Activated B cell treated with CpG ODN at 0.5 μM for 24 hours (primary cell): ENCODE measurements at regions of chr5 and their contacts with region 1.

Region 1: DNA sequence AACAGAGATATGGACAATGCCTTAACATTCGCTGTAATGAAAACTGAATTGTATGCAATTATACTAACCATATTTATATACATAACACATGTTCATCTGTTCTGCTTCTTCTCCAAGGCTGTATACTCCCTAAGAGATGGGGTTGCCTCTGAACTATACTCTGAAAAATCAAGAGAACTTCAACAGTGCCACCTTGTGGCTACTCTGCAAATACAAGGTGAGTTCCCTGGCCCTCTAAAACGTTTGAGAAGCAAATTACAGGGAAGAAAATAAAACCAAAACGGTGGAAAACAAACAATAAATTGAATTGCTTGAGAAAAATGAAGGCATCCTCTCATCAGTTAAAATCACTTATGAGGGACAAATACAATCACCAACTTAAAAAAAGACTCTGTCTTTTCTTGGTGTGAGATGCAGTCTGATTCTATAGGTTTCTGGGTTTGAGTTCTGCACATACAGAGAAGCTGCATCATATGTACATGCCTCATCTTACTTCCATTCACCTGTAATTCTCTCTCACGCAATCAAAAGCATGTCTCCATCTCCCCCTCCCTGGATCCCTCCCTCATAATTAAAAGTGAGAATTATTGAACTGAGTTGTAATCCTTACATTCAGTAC is 98.6 kb downstream of the FBXW11 start:
- DNase-seq: no peak
- ATAC-seq: peak; percentile 73
- H3K4me3 Mint-ChIP-seq: no peak overlapping the region
- H3K27ac Mint-ChIP-seq: peak overlapping the region; percentile 15
- H3K4me1 Mint-ChIP-seq: peaks cover 49% of the 10 kb centered on the region
- H3K27me3 Mint-ChIP-seq: no peaks in the 10 kb centered on the region
- CTCF ChIP-seq: no peak

Region 2: GRCh38 chr5:171207256-171207847 is 700.5 kb before region 1 on chr5:
- CTCF ChIA-PET with region 1: no interaction called
- POLR2A ChIA-PET with region 1: no interaction called
- intact Hi-C with region 1: loop called (anchors 5 kb)
- DNase-seq: no peak
- ATAC-seq: no peak
- H3K4me3 Mint-ChIP-seq: no peak overlapping the region
- H3K27ac Mint-ChIP-seq: no peak overlapping the region
- H3K4me1 Mint-ChIP-seq: no peaks in the 10 kb centered on the region
- H3K27me3 Mint-ChIP-seq: peaks cover 9% of the 10 kb centered on the region
- CTCF ChIP-seq: no peak

Region 3: DNA sequence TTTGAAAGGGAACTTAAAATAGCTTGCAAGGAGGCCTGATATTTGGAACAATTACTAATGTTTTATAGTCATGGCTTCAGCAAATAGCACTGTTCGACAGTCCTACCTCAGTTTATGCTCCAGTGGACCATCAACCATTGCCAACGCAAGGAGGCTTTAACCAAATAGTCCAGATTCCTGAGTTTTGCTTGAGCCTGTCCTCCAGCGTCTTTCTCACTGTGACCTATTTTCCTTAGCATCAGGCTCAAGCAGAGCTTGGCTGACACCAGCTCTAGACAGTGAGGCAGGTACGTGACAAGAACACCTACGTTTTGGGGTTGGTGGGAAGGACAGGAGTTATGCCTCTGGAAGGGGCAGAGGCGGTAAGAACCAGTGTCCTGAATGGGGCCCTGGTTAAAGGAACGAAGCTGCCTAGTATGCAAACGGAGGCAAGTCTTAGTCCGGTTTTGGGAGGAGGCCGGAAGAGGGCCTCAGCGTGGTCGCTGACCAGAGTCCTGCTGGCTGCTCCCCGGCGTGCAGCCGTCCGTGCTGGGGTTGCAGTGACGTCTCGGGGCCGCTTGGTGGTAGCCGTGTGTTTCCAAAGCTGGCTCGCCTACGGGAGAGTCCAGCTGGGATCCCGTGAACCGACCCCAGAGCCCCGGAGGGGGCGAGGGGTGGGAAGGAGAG is 489.4 kb before region 1 on chr5:
- CTCF ChIA-PET with region 1: interaction called, 9 read pairs
- POLR2A ChIA-PET with region 1: no interaction called
- intact Hi-C with region 1: loop called (anchors 1 kb)
- DNase-seq: peak; percentile 42
- ATAC-seq: peak; percentile 67
- H3K4me3 Mint-ChIP-seq: peak overlapping the region; percentile 71
- H3K27ac Mint-ChIP-seq: no peak overlapping the region
- H3K4me1 Mint-ChIP-seq: peaks cover 20% of the 10 kb centered on the region
- H3K27me3 Mint-ChIP-seq: peaks cover 20% of the 10 kb centered on the region
- CTCF ChIP-seq: peak; percentile 49

Region 4: GRCh38 chr5:172035039-172035438 is 127.2 kb after region 1 on chr5:
- CTCF ChIA-PET with region 1: interaction called, 116 read pairs
- POLR2A ChIA-PET with region 1: no interaction called
- intact Hi-C with region 1: loop called (anchors 1 kb)
- DNase-seq: no peak
- ATAC-seq: peak; percentile 62
- H3K4me3 Mint-ChIP-seq: no peak overlapping the region
- H3K27ac Mint-ChIP-seq: peak overlapping the region; percentile 18
- H3K4me1 Mint-ChIP-seq: peaks cover 16% of the 10 kb centered on the region
- H3K27me3 Mint-ChIP-seq: no peaks in the 10 kb centered on the region
- CTCF ChIP-seq: no peak

Region 5: DNA sequence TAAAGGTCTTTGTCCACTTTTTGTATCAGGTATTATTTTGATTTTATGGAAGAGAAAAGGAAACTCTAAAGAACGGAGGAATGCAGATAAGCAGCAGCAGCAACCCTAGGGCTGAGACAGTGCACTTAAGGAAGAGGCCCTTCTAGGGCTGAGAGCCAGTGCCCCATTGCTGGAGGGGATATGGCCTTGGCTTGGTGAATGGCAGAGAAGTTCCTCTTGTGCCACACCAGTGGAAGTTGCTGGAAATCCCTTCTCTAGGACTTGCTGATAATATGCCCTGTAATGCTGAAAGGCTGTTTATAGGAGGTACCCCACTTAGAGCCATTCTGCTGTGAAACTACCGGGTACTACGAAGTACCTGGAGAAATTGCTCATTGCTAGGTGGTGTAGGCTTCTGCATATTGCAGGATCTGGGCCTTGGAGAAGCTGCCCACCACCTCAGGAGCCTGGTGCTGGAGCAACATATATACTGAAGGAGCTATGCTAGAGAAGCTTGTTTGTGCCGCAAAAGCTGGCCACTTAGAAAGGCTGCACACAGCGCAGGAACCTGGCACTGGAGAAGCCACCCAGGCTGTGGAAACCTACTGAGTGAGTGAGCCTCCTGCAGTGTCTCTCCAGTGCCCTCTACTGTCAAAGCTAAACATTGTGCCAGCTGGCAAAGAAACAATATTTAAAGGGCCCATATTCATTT is 385.4 kb after region 1 on chr5:
- CTCF ChIA-PET with region 1: interaction called, 16 read pairs
- POLR2A ChIA-PET with region 1: no interaction called
- intact Hi-C with region 1: loop called (anchors 1 kb)
- DNase-seq: peak; percentile 21
- ATAC-seq: peak; percentile 100
- H3K4me3 Mint-ChIP-seq: no peak overlapping the region
- H3K27ac Mint-ChIP-seq: no peak overlapping the region
- H3K4me1 Mint-ChIP-seq: peaks cover 2% of the 10 kb centered on the region
- H3K27me3 Mint-ChIP-seq: peaks cover 3% of the 10 kb centered on the region
- CTCF ChIP-seq: peak; percentile 67